Activated CD4-positive, alpha-beta memory T cell treated with anti-CD3 and anti-CD28 coated beads for 36 hours (primary cell): ENCODE measurements at regions of chr14 and their contacts with region 1.

Region 1: GRCh38 chr14:91228112-91229004 is 16.1 kb downstream of the GPR68 start:
- DNase-seq: peak; percentile 95
- H3K4me3 Mint-ChIP-seq: peak overlapping the region; percentile 59
- H3K27ac Mint-ChIP-seq: peak overlapping the region; percentile 94
- H3K4me1 Mint-ChIP-seq: peaks cover 94% of the 10 kb centered on the region
- H3K27me3 Mint-ChIP-seq: no peaks in the 10 kb centered on the region

Region 2: GRCh38 chr14:89578156-89578555 is 1650.2 kb before region 1 on chr14:
- CTCF ChIA-PET with region 1: no interaction called
- POLR2A ChIA-PET with region 1: no interaction called
- intact Hi-C with region 1: no loop called
- DNase-seq: no peak
- H3K4me3 Mint-ChIP-seq: no peak overlapping the region
- H3K27ac Mint-ChIP-seq: no peak overlapping the region
- H3K4me1 Mint-ChIP-seq: peaks cover 19% of the 10 kb centered on the region
- H3K27me3 Mint-ChIP-seq: no peaks in the 10 kb centered on the region

Region 3: GRCh38 chr14:91114079-91115065 is 114.0 kb before region 1 on chr14:
- CTCF ChIA-PET with region 1: no interaction called
- POLR2A ChIA-PET with region 1: interaction called, 3 read pairs
- intact Hi-C with region 1: loop called (anchors 1 kb)
- DNase-seq: peak; percentile 81
- H3K4me3 Mint-ChIP-seq: peak overlapping the region; percentile 83
- H3K27ac Mint-ChIP-seq: peak overlapping the region; percentile 94
- H3K4me1 Mint-ChIP-seq: peaks cover 66% of the 10 kb centered on the region
- H3K27me3 Mint-ChIP-seq: no peaks in the 10 kb centered on the region

Region 4: GRCh38 chr14:91154851-91155625 is 73.3 kb before region 1 on chr14:
- CTCF ChIA-PET with region 1: no interaction called
- POLR2A ChIA-PET with region 1: no interaction called
- intact Hi-C with region 1: no loop called
- DNase-seq: peak; percentile 31
- H3K4me3 Mint-ChIP-seq: no peak overlapping the region
- H3K27ac Mint-ChIP-seq: no peak overlapping the region
- H3K4me1 Mint-ChIP-seq: peaks cover 9% of the 10 kb centered on the region
- H3K27me3 Mint-ChIP-seq: no peaks in the 10 kb centered on the region

Region 5: GRCh38 chr14:91185721-91186120 is 42.6 kb before region 1 on chr14:
- CTCF ChIA-PET with region 1: no interaction called
- POLR2A ChIA-PET with region 1: no interaction called
- intact Hi-C with region 1: no loop called
- DNase-seq: no peak
- H3K4me3 Mint-ChIP-seq: no peak overlapping the region
- H3K27ac Mint-ChIP-seq: no peak overlapping the region
- H3K4me1 Mint-ChIP-seq: no peaks in the 10 kb centered on the region
- H3K27me3 Mint-ChIP-seq: no peaks in the 10 kb centered on the region

Region 6: DNA sequence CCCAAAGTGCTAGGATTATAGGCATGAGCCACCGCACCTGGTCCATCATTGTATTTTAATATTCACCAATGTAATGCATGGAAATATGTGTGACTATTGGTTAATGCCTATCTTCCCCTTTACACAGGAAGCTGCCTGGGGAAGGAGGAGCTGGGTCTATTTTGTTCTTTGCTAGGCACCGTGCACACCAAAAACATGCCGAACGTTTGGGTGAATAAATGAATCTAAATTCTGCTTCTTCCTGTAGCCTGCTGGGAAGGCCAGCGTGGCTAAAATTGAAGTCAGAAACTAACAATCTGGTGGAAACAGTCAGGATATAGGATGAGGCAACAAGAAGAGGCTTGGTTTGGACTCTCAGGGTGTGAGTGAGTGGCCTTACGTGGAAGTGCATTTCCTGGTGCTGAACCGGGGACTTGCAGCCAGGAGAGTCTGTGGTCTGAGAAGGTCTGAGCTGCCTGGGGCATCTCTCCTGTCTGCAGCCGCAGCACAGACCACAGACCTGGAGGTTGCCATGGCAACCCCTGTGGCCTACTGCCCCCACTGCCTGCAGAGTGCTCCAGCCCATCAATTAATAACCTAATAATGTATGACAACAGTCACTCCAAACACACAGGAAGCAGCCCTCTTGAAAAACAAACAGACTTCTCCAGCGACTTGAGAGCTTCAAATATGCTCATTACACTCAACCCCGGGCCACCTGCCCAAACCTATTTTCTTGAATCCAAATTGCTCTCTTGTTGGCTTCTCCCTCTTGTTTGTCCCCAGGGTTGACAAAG is 21.7 kb after region 1 on chr14:
- CTCF ChIA-PET with region 1: interaction called, 71 read pairs
- POLR2A ChIA-PET with region 1: interaction called, 325 read pairs
- intact Hi-C with region 1: no loop called
- DNase-seq: peak; percentile 67
- H3K4me3 Mint-ChIP-seq: peak overlapping the region; percentile 36
- H3K27ac Mint-ChIP-seq: peak overlapping the region; percentile 92
- H3K4me1 Mint-ChIP-seq: peaks cover 85% of the 10 kb centered on the region
- H3K27me3 Mint-ChIP-seq: no peaks in the 10 kb centered on the region

Region 7: GRCh38 chr14:91303091-91303923 is 74.9 kb after region 1 on chr14:
- CTCF ChIA-PET with region 1: no interaction called
- POLR2A ChIA-PET with region 1: no interaction called
- intact Hi-C with region 1: loop called (anchors 1 kb)
- DNase-seq: peak; percentile 94
- H3K4me3 Mint-ChIP-seq: peak overlapping the region; percentile 54
- H3K27ac Mint-ChIP-seq: peak overlapping the region; percentile 95
- H3K4me1 Mint-ChIP-seq: peaks cover 56% of the 10 kb centered on the region
- H3K27me3 Mint-ChIP-seq: no peaks in the 10 kb centered on the region

Region 8: GRCh38 chr14:91332151-91332985 is 104.0 kb after region 1 on chr14:
- CTCF ChIA-PET with region 1: no interaction called
- POLR2A ChIA-PET with region 1: no interaction called
- intact Hi-C with region 1: no loop called
- DNase-seq: no peak
- H3K4me3 Mint-ChIP-seq: no peak overlapping the region
- H3K27ac Mint-ChIP-seq: peak overlapping the region; percentile 57
- H3K4me1 Mint-ChIP-seq: peaks cover 44% of the 10 kb centered on the region
- H3K27me3 Mint-ChIP-seq: no peaks in the 10 kb centered on the region

Region 9: DNA sequence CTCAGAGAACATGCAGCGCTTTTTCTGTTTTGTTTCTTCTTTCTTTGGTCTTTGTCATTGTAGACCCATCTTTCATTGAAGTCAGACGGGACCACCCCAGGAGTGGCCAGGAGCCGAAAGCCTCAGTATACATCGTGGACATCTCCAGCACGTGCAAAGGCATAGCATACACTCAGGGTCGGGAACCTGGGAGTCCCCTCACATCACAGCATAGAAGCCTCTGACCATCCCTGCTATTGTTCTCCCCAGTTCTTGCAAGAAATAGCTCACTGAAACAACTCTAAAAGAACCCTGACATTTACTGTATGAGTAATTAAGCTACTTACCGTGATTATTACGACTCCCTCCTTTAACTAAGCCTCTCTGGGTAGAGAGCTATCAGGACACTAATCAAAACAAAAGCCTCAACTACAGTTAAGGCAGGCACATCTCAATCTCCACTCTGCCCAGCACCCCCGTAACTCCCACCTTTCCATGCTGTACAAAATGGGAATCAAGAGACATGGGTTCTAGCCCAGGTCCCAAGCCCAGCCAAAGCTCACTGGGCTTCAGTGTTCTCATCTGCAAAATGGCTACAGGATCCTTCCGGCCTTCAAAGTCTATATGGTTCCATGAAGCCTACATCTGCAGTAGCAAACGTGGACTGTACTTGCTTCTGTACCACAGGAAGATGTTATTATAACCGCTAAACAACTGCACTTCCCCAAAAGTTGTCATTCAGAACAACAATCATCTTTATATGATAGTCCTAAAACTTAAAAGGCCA is 182.6 kb after region 1 on chr14:
- CTCF ChIA-PET with region 1: no interaction called
- POLR2A ChIA-PET with region 1: no interaction called
- intact Hi-C with region 1: loop called (anchors 1 kb)
- DNase-seq: peak; percentile 46
- H3K4me3 Mint-ChIP-seq: peak overlapping the region; percentile 63
- H3K27ac Mint-ChIP-seq: peak overlapping the region; percentile 93
- H3K4me1 Mint-ChIP-seq: peaks cover 87% of the 10 kb centered on the region
- H3K27me3 Mint-ChIP-seq: no peaks in the 10 kb centered on the region